Esophagus muscularis mucosa (tissue), 4 donors: ENCODE measurements at regions of chr12 and their contacts with region 1.

Region 1: DNA sequence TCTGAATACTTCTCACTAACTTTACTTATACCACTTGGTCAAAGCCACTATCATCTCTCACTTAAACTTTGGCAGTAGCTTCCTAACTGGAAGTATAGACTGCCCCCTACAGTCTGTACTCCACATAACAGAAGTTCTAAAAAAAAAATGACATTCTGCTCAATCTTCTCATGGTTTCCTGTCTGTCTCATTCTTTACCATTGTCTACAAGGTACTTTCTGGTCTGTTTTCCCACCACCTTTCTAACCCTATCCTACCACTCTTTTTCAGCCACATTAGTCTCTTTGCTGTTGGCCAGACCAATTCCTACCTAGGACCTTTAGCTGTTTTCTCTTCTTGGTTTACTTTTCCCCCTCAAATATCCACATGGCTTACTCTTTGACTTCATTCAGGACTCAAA is 14.7 kb downstream of the CPSF6 start:
- DNase-seq: no peak
- H3K4me3 ChIP-seq: no peak overlapping the region
- H3K27ac ChIP-seq: no peak overlapping the region
- H3K4me1 ChIP-seq: peaks cover 8 to 22% (median 19%) of the 10 kb centered on the region in 4 donors
- H3K27me3 ChIP-seq: no peaks in the 10 kb centered on the region
- CTCF ChIP-seq: peak; percentile 49 to 68 (median 60)
- EP300 ChIP-seq: no peak
- POLR2A ChIP-seq: no peak

Region 2: GRCh38 chr12:69157023-69157655 is 96.9 kb before region 1 on chr12:
- intact Hi-C with region 1: loop called (anchors 2 kb)
- DNase-seq: peak; percentile 96
- H3K4me3 ChIP-seq: peak overlapping the region in 1 of 4 donors; percentile 8
- H3K27ac ChIP-seq: no peak overlapping the region
- H3K4me1 ChIP-seq: peaks cover 0 to 7% (median 7%) of the 10 kb centered on the region in 4 donors
- H3K27me3 ChIP-seq: no peaks in the 10 kb centered on the region
- CTCF ChIP-seq: peak; percentile 79 to 93 (median 79)
- EP300 ChIP-seq: no peak
- POLR2A ChIP-seq: no peak